Testis (tissue), 5 donors: ENCODE measurements at regions of chr17 and their contacts with region 1.

Region 1: GRCh38 chr17:17859909-17860765 is 23.4 kb upstream of the SREBF1 start:
- DNase-seq: peak; percentile 76
- H3K4me3 ChIP-seq: no peak overlapping the region
- H3K27ac ChIP-seq: no peak overlapping the region
- H3K4me1 ChIP-seq: peaks cover 17% of the 10 kb centered on the region
- H3K27me3 ChIP-seq: no peaks in the 10 kb centered on the region
- CTCF ChIP-seq: peak; percentile 90 to 97 (median 91)
- POLR2A ChIP-seq: no peak

Region 2: GRCh38 chr17:17812211-17813057 is 47.7 kb before region 1 on chr17:
- intact Hi-C with region 1: loop called (anchors 5 kb)
- DNase-seq: peak; percentile 81
- H3K4me3 ChIP-seq: peak overlapping the region; percentile 21 to 47
- H3K27ac ChIP-seq: peak overlapping the region; percentile 47 to 50
- H3K4me1 ChIP-seq: peaks cover 28% of the 10 kb centered on the region
- H3K27me3 ChIP-seq: no peaks in the 10 kb centered on the region
- CTCF ChIP-seq: peak; percentile 99 to 100 (median 99)
- POLR2A ChIP-seq: no peak

Region 3: DNA sequence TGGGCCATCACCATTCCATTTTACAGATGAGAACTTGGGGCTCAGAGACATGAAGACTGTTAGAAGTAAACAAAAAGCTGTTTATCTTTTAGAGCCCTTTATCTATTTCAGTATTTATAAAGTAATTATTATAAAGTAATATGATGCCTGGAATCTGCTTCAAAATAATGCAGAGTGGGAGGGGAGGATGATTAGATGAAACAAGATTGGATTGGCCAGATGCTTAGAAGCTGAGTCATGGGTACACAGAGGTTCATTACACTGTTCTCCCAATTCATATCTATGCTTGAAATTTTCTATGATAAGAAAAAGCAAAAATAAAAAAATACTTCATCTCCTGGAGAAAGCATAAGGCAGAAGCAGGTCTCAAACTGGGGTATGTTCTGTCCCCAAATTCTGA is 82.7 kb after region 1 on chr17:
- intact Hi-C with region 1: no loop called
- DNase-seq: no peak
- H3K4me3 ChIP-seq: no peak overlapping the region
- H3K27ac ChIP-seq: peak overlapping the region; percentile 76 to 79
- H3K4me1 ChIP-seq: peaks cover 72% of the 10 kb centered on the region
- H3K27me3 ChIP-seq: no peaks in the 10 kb centered on the region
- CTCF ChIP-seq: no peak
- POLR2A ChIP-seq: no peak